WTC11 (cell line): ENCODE measurements at regions of chr5 and their contacts with region 1.

Region 1: GRCh38 chr5:35003018-35003957 is 44.5 kb downstream of the AGXT2 start:
- DNase-seq: peak; percentile 66
- ATAC-seq: peak; percentile 85
- H3K4me3 Mint-ChIP-seq: no peak overlapping the region
- H3K27ac Mint-ChIP-seq: no peak overlapping the region
- H3K4me1 Mint-ChIP-seq: peaks cover 18% of the 10 kb centered on the region
- H3K27me3 Mint-ChIP-seq: no peaks in the 10 kb centered on the region; the same call in 1 of the 2 replicates
- CTCF ChIP-seq: peak; percentile 96

Region 2: DNA sequence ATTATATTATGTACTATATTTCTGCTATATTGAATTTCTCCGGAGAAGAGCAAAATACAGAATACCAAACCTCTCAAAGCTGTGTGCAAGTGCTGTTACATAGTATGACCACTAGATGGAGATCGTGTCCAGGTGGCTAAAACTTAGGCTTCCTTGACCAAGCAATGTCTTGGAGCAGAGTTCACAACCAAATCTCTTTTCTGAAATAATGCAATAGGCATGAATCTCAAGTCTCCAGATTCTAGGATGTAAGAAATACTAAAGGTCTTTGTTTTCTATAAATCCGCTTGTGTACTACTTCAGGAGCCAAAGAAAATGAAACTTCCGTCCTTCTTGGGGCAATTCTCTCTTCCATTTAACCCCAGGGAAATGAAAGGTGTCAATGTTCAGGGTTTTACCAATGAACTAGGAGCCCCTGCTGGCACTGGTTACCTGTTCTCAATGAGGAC is 528.7 kb before region 1 on chr5:
- CTCF ChIA-PET with region 1: interaction called, 12 read pairs
- POLR2A ChIA-PET with region 1: no interaction called
- DNase-seq: no peak
- ATAC-seq: peak; percentile 58
- H3K4me3 Mint-ChIP-seq: peak overlapping the region; percentile 45; the same call in 1 of the 2 replicates
- H3K27ac Mint-ChIP-seq: peak overlapping the region; percentile 98
- H3K4me1 Mint-ChIP-seq: peaks cover 25% of the 10 kb centered on the region
- H3K27me3 Mint-ChIP-seq: peaks cover 9% of the 10 kb centered on the region
- CTCF ChIP-seq: peak; percentile 90

Region 3: GRCh38 chr5:34826347-34826746 is 176.9 kb before region 1 on chr5:
- CTCF ChIA-PET with region 1: no interaction called
- POLR2A ChIA-PET with region 1: no interaction called
- DNase-seq: peak; percentile 15
- ATAC-seq: peak; percentile 44; the same call in 1 of the 2 replicates
- H3K4me3 Mint-ChIP-seq: no peak overlapping the region
- H3K27ac Mint-ChIP-seq: no peak overlapping the region
- H3K4me1 Mint-ChIP-seq: peaks cover 8% of the 10 kb centered on the region
- H3K27me3 Mint-ChIP-seq: no peaks in the 10 kb centered on the region
- CTCF ChIP-seq: no peak

Region 4: GRCh38 chr5:34929150-34929719 is 74.1 kb before region 1 on chr5 and contains the start of gene DNAJC21:
- CTCF ChIA-PET with region 1: interaction called, 16 read pairs
- POLR2A ChIA-PET with region 1: no interaction called
- DNase-seq: peak; percentile 98
- ATAC-seq: peak; percentile 95
- H3K4me3 Mint-ChIP-seq: peak within 1 kb of the TSS; percentile 97
- H3K27ac Mint-ChIP-seq: peak within 1 kb of the TSS; percentile 98
- H3K4me1 Mint-ChIP-seq: peaks cover 19% of the 10 kb centered on the region
- H3K27me3 Mint-ChIP-seq: no peaks in the 10 kb centered on the region
- CTCF ChIP-seq: no peak
- total RNA-seq, gene DNAJC21: 48.7 to 62.5 TPM (median 49.6 TPM) in 3 replicates

Region 5: DNA sequence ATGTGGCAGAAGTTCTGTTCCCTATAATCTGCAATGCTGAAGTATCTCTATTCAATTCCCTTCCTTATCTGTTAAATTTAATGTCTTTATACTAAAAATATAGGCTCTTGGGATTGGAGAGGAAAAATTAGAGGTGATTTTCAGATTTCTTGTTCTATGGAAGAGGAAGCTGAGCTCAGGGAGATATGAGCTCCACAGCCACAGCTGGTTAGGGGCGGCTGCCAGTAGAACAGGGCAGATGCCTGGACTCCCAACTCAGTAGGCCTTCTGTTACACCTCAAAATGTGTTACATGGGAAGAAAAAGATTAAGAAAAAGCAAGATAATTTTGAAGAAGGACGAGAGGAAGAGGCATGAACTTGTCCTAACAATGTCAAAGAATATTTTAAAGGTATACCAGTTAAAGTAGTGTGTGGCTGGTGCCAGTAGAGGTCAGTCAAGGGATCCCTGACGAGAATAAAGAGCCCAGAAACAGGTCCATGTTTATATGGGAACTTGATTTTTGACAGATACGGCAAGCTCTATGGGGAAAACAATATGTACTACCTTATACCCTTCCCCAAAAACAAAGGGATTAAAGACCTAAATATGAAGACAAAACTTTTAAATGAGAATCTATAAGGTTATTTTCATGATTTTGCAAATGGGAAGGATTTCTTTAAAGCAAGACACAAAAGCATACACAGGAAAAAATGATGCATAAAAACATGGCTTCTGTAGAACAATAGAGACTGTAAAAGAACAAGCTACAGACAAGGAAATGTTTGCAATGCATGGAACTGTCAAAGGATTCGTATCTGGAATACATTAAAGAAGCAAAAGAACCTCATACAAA is 45.2 kb before region 1 on chr5:
- CTCF ChIA-PET with region 1: interaction called, 33 read pairs
- POLR2A ChIA-PET with region 1: no interaction called
- DNase-seq: no peak
- ATAC-seq: peak; percentile 91
- H3K4me3 Mint-ChIP-seq: no peak overlapping the region
- H3K27ac Mint-ChIP-seq: no peak overlapping the region; the same call in 1 of the 2 replicates
- H3K4me1 Mint-ChIP-seq: no peaks in the 10 kb centered on the region
- H3K27me3 Mint-ChIP-seq: no peaks in the 10 kb centered on the region
- CTCF ChIP-seq: no peak